Activated T-helper 2 cell treated with anti-CD3 and anti-CD28 coated beads, Interferon-gamma antibody, Interleukin-2, Interleukin-4, amounts not matched to agents 10 μg/mL and 5 μg/mL and 100 μg/mL, durations not matched to agents 14 hours and 24 hours and 36 hours (primary cell): ENCODE measurements at regions of chr13 and their contacts with region 1.

Region 1: GRCh38 chr13:52450012-52450792 is at the start of gene VPS36:
- DNase-seq: peak; percentile 92
- H3K4me3 Mint-ChIP-seq: peak within 1 kb of the TSS; percentile 95
- H3K27ac Mint-ChIP-seq: peak within 1 kb of the TSS; percentile 91
- H3K4me1 Mint-ChIP-seq: peaks cover 37% of the 10 kb centered on the region
- H3K27me3 Mint-ChIP-seq: no peaks in the 10 kb centered on the region
- total RNA-seq, gene VPS36: 52.3 and 53.5 TPM in 2 replicates

Region 2: DNA sequence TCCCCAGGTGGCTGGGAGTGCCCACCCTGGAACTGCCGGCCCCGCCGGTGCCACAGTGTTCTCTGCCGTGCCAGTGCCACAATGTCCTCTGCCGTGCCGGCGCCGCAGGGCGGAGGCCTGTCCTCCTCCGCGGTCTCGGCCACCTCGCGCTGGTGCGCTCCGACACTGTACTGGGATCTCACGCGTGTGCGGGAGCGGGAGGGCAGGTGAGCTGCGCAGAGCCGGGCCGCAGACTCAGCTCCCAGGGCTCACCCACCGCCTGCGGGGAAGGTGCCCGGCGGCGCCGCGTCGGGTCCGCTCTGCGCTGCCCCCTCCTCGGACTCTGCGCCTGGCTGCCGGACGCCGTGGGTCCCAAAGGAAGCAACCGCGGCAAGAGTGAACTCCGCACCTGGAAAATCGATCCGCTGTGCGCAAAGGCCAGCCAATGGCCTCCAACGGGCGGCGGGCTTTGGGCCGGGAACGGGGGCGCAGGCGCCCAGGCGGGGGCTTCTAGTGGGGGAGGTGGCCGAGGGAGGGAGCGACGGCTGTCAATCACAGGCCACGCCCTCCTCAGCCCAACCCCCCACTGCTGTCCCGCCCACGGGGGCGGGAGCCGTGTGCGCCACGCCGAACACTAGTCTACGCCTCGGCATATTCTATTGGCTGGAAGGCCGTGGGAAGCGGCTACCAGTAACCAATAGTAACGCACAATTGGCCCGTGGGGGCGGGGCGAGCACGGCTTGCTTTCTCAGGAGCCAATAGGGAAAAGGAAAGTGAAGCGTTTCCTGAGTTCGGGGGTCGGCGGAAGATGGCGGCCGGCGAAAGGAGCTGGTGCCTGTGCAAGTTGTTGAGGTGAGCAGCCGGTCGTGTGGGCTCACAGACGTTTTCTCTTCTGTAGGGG is 438.3 kb before region 1 on chr13 and contains the start of gene ALG11:
- intact Hi-C with region 1: loop called (anchors 1 kb)
- DNase-seq: peak; percentile 99
- H3K4me3 Mint-ChIP-seq: peak within 1 kb of the TSS; percentile 94
- H3K27ac Mint-ChIP-seq: peak within 1 kb of the TSS; percentile 86
- H3K4me1 Mint-ChIP-seq: peaks cover 9% of the 10 kb centered on the region
- H3K27me3 Mint-ChIP-seq: peaks cover 35% of the 10 kb centered on the region
- total RNA-seq, gene ALG11: 21.5 and 21.9 TPM in 2 replicates

Region 3: DNA sequence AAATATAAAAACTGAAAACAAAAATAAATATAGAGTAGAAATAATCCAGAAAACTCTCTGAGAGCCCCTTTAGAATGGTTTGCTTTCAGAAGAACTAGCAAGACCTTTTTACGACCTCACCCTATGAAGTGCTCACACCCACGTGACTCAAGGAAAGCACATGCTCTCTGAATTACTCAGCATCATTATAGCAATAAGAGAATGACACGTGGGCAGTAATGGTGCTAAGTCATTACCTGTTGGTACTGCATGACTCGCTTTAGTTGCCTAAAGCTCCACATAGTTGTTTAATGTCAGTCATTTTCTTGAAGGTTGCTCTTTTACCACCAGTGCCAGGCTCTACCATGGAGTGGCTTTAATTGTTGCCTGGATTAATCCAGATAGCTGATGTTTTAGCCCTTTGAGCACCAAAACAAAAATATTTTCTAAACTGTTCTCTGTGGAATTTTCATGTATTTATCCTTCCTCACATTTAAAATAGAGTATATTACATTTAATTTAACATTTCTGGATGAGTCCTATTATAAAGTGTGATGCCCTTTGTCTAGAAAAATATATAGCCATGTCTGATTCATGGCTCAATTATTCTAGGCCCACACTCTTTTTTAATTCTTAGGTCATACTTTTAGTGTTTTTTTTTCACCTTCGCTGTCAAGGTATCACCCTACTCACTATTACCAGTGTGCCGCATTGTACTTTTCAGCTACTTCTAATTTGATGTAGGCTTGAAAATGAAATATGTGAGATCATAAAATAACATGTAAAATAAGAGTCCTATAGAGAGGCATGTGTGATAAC is 101.0 kb before region 1 on chr13:
- intact Hi-C with region 1: loop called (anchors 5 kb)
- DNase-seq: no peak
- H3K4me3 Mint-ChIP-seq: no peak overlapping the region
- H3K27ac Mint-ChIP-seq: no peak overlapping the region
- H3K4me1 Mint-ChIP-seq: peaks cover 2% of the 10 kb centered on the region
- H3K27me3 Mint-ChIP-seq: peaks cover 13% of the 10 kb centered on the region

Region 4: DNA sequence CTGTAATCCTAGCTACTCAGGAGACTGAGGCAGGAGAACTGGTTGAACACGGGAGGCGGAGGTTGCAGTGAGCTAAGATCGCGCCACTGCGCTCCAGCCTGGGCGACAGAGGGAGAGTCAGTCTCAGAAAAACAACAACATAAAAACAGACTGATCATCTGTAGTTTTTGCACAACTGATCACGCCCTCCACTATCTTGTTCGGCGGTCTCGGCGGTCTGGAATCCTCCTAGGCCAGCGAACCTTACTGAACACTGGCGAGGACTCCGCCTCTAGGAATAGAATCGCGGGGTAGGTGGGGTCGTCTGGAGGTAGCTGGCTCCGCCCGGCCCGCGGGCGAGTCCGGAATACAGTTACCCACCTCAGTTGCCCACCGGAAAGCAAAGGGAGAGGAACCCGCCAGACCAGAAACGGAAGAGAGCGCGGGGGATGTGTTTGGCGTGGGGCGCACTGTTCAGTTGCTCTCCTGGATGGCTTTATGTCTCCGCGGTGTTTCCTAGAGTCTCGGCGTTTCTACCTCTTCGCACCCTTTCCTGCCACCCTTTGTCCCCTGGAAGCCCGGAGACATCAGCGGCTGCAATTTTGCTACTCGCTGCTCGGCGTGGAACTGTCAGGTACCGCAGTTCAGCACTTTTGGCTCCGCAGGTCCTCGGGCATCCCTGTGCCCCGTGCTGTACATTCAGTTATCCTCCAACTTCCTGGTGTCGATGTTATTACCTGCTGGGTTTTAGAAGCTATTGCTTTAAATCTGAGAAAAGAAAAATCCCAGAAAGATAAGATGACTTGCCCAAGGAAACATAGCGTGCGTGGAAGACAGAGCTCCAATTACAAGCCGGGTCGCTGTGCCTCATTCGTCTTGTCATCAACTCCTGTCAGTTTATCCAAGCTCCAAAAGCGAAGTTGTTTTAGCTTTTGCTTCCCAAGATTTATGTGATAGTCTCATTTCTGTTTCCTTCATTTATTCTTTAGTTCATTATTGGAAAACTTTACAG is 167.2 kb after region 1 on chr13:
- intact Hi-C with region 1: loop called (anchors 2 kb)
- DNase-seq: peak; percentile 80
- H3K4me3 Mint-ChIP-seq: peak overlapping the region; percentile 99
- H3K27ac Mint-ChIP-seq: peak overlapping the region; percentile 89
- H3K4me1 Mint-ChIP-seq: peaks cover 16% of the 10 kb centered on the region
- H3K27me3 Mint-ChIP-seq: peaks cover 6% of the 10 kb centered on the region

Region 5: DNA sequence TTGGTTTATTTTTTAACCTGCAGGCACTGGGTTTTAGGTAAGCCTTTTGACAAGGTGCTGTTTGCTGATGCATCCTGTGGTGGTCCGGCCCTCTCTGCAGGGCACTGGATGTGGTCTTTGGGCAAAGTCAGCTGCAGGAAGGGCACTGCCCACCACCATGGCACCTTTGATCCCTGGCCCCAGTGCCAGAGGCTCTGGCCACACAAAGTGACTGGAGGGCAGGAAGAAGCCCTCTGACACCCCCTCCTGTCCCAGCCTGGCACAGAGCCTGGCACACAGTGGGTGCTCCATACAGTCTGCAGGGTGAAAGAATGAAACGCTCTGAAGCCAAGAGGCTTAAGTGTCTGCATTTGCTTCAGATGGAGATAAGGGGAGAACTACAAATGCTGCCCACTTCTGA is 337.0 kb after region 1 on chr13:
- intact Hi-C with region 1: no loop called
- DNase-seq: no peak
- H3K4me3 Mint-ChIP-seq: no peak overlapping the region
- H3K27ac Mint-ChIP-seq: no peak overlapping the region
- H3K4me1 Mint-ChIP-seq: no peaks in the 10 kb centered on the region
- H3K27me3 Mint-ChIP-seq: no peaks in the 10 kb centered on the region